ENCODE measurements at regions of chr4 and their contacts with region 1.

Region 1: DNA sequence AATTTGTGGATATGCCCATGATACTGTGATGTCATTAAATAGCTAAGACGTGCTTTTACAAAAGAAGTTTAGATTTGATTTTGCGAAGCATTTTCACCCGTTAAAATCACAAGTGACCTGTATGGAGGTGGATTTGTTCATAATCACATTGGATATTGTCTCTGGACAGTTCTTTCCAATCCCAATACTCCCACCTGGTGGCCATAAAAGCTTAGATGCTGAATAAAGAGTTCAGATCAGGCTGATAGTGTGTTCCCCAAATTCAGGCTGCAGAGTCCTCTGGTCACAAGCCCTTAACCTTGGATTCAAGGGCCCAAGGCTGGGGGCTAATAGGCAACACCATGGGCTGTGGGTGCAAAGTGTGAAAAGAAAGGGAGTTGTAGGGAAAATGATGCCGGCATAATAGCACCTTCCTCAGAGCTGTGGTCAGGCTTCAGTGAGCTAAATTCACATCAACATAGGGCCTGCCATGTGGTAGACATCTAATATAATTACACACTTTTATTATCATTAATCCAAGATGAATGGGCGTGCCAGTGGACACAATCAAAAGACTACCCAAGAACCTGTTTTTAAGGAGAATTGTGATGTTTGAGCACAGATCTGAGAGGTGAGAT is 28.1 kb downstream of the SMIM43 start:
- DNase-seq: peak in 3 of 9 experiments; percentile 16 to 39 (median 36)
- ATAC-seq: no peak
- H3K4me3 ChIP-seq: no peak overlapping the region
- H3K4me3 Mint-ChIP-seq: no peak overlapping the region
- H3K27ac ChIP-seq: no peak overlapping the region
- H3K27ac Mint-ChIP-seq: no peak overlapping the region
- H3K4me1 ChIP-seq: no peaks in the 10 kb centered on the region
- H3K4me1 Mint-ChIP-seq: no peaks in the 10 kb centered on the region
- H3K27me3 ChIP-seq: no peaks in the 10 kb centered on the region
- H3K27me3 Mint-ChIP-seq: peaks cover 10% of the 10 kb centered on the region
- CTCF ChIP-seq: no peak

Region 2: DNA sequence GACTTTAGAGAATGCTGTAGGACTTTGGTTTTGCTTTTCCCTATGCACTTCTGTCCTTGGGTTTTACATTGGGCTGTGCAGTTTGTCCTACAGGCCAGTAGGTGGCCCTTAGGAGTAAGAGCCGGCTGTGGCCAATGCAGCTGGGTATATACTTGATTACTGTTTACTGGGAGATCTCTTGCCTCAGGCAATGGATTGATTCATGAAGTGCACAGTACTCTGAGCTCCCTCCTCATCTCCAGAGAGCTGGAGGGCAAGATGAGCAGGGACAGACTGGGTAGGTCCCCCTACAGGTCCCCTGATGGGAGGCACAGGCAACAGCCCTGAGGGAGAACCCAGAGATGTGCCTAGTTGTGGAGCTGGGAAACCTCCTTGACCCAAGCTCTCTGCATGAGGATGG is 252.2 kb before region 1 on chr4:
- CTCF ChIA-PET with region 1: no interaction called
- POLR2A ChIA-PET with region 1: no interaction called
- intact Hi-C with region 1: loop called in 1 of 2 experiments (anchors 10 kb)
- DNase-seq: peak in 2 of 9 experiments; percentile 24 to 38
- ATAC-seq: no peak
- H3K4me3 ChIP-seq: no peak overlapping the region
- H3K4me3 Mint-ChIP-seq: no peak overlapping the region
- H3K27ac ChIP-seq: no peak overlapping the region
- H3K27ac Mint-ChIP-seq: no peak overlapping the region
- H3K4me1 ChIP-seq: no peaks in the 10 kb centered on the region
- H3K4me1 Mint-ChIP-seq: no peaks in the 10 kb centered on the region
- H3K27me3 ChIP-seq: peaks cover 0 to 3% of the 10 kb centered on the region in 2 experiments
- H3K27me3 Mint-ChIP-seq: peaks cover 7% of the 10 kb centered on the region
- CTCF ChIP-seq: peak; percentile 24

Measured in CD8-positive, alpha-beta T cell (primary cell).